ENCODE measurements at regions of chr4 and their contacts with region 1.

Region 1: DNA sequence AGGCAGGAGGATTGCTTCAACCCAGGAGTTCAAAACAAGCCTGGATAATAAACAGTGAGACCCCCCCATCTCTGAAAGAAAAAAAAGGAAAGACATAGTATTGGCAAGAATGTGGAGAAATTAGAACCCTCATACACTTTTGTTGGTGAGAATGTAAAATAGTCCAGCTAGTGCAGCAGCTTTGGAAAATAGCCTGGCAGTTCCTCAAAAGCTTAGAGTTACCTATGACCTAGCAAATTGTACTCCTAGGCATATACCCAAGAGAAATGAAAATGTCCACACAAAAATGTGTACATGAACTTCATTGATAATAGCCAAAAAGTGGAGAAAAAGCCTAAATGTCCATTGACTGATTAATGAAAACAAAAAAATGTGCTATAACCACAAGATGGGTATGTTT is 21.3 kb downstream of the THAP9 start:
- DNase-seq: no peak
- ATAC-seq: no peak
- H3K4me3 ChIP-seq: no peak overlapping the region
- H3K27ac ChIP-seq: no peak overlapping the region
- H3K4me1 ChIP-seq: no peaks in the 10 kb centered on the region
- H3K27me3 ChIP-seq: no peaks in the 10 kb centered on the region
- CTCF ChIP-seq: no peak
- POLR2A ChIP-seq: no peak
- RAD21 ChIP-seq: no peak

Region 2: DNA sequence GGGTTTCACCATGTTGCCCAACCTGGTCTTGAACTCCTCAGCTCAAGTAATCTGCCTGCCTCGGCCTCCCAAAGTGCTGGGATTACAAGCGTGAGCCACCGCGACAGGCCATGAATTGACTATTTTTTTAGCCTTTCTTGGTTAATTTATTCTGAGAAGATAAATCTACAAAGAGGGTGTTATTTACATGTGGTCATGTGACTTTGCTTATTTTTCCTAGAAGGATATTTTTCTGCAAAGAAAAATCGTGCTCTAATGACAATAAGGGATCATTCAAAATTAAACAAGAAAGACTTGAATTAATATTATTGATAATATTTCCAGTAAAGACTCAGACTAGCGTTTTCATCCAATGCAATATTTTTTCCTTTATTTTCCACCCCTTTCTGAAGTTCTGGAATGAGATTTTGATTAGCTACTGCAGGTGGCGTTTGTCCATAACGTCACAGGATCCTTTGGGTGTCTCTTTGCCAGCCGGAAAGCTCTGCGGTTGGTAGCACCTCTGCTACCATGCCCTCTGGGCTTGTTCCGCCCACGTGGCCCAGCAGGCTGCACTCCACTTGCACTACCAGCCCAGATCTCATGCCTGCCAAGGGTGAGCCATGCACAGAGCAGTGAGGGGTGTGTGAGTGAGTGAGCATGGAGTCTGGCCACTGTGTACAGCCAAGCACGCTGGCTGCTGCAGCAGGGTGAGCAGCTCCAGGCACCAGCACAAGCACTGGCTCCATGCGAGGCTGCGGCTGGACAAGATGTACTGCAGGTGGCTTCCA is 541.6 kb before region 1 on chr4:
- CTCF ChIA-PET with region 1: no interaction called
- POLR2A ChIA-PET with region 1: no interaction called
- dilution Hi-C with region 1: no loop called
- in situ Hi-C with region 1: no loop called
- intact Hi-C with region 1: no loop called
- DNase-seq: no peak
- ATAC-seq: no peak
- H3K4me3 ChIP-seq: no peak overlapping the region
- H3K27ac ChIP-seq: no peak overlapping the region
- H3K4me1 ChIP-seq: no peaks in the 10 kb centered on the region
- H3K27me3 ChIP-seq: no peaks in the 10 kb centered on the region
- CTCF ChIP-seq: no peak
- POLR2A ChIP-seq: no peak
- RAD21 ChIP-seq: no peak

Region 3: DNA sequence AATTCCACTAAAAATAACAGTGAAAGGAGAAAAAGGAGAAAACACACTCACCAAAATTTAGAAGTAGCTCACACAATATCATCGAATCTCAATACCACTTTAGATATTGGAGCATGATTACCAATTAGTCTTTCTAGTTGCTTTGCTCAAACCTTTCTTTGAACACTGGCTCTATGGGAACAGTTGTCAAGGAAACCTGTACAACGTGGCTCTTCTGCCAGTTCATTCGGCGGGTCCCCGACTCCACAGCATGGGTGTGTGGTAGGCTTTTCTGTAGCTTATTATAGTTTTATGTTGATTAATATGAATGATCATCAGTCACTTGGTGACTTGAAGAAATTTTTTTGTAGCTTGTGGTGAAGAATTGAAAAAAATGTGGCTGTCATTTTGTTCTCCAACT is 309.8 kb before region 1 on chr4:
- CTCF ChIA-PET with region 1: no interaction called
- POLR2A ChIA-PET with region 1: no interaction called
- dilution Hi-C with region 1: no loop called
- in situ Hi-C with region 1: no loop called
- intact Hi-C with region 1: no loop called
- DNase-seq: no peak
- ATAC-seq: no peak
- H3K4me3 ChIP-seq: no peak overlapping the region
- H3K27ac ChIP-seq: no peak overlapping the region
- H3K4me1 ChIP-seq: no peaks in the 10 kb centered on the region
- H3K27me3 ChIP-seq: peaks cover 33% of the 10 kb centered on the region
- CTCF ChIP-seq: no peak
- POLR2A ChIP-seq: no peak
- RAD21 ChIP-seq: no peak

Region 4: GRCh38 chr4:82811838-82812341 is 109.9 kb before region 1 on chr4:
- CTCF ChIA-PET with region 1: no interaction called
- POLR2A ChIA-PET with region 1: no interaction called
- dilution Hi-C with region 1: no loop called
- in situ Hi-C with region 1: no loop called
- intact Hi-C with region 1: no loop called
- DNase-seq: peak; percentile 41
- ATAC-seq: peak; percentile 48
- H3K4me3 ChIP-seq: no peak overlapping the region
- H3K27ac ChIP-seq: no peak overlapping the region
- H3K4me1 ChIP-seq: peaks cover 2% of the 10 kb centered on the region; the same call in 1 of the 2 replicates
- H3K27me3 ChIP-seq: no peaks in the 10 kb centered on the region
- CTCF ChIP-seq: no peak
- POLR2A ChIP-seq: no peak
- RAD21 ChIP-seq: no peak

Region 5: DNA sequence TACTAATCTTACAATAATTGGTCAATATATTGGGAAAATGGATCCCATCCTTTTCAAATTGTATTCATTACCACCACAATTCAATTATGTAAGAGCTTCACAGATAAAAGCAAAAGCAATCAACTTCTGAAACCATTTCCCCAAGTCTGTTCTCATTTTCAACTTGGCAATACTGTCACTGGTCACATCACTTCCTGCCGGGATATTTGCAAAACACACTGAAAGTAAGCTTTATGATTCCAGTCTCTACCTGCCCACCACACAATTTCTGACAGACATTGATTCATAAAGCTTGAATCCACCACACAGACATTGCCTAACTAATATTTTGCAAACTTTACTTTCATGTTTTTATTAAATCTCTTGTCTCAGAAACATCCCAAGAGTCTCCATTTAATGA is 35.2 kb after region 1 on chr4:
- CTCF ChIA-PET with region 1: no interaction called
- POLR2A ChIA-PET with region 1: no interaction called
- dilution Hi-C with region 1: no loop called
- in situ Hi-C with region 1: no loop called
- intact Hi-C with region 1: loop called (anchors 5 kb)
- DNase-seq: no peak
- ATAC-seq: no peak
- H3K4me3 ChIP-seq: no peak overlapping the region
- H3K27ac ChIP-seq: no peak overlapping the region
- H3K4me1 ChIP-seq: no peaks in the 10 kb centered on the region
- H3K27me3 ChIP-seq: no peaks in the 10 kb centered on the region
- CTCF ChIP-seq: no peak
- POLR2A ChIP-seq: no peak
- RAD21 ChIP-seq: no peak

Measured in IMR-90 (cell line).